ENCODE measurements at regions of chr19 and their contacts with region 1.

Region 1: GRCh38 chr19:40603389-40604135 is 2.4 kb downstream of the LTBP4 start:
- DNase-seq: peak; percentile 98
- H3K4me3 ChIP-seq: peak overlapping the region; percentile 66
- H3K27ac ChIP-seq: no peak overlapping the region
- H3K4me1 ChIP-seq: peaks cover 62% of the 10 kb centered on the region
- CTCF ChIP-seq: no peak

Region 2: GRCh38 chr19:40285353-40286234 is 318.0 kb before region 1 on chr19:
- CTCF ChIA-PET with region 1: no interaction called
- POLR2A ChIA-PET with region 1: no interaction called
- intact Hi-C with region 1: loop called (anchors 10 kb)
- DNase-seq: peak; percentile 100
- H3K4me3 ChIP-seq: peak overlapping the region; percentile 85
- H3K27ac ChIP-seq: peak overlapping the region; percentile 94
- H3K4me1 ChIP-seq: peaks cover 54% of the 10 kb centered on the region
- CTCF ChIP-seq: no peak

Region 3: GRCh38 chr19:40576585-40577451 is 26.7 kb before region 1 on chr19 and contains the start of gene SHKBP1:
- CTCF ChIA-PET with region 1: no interaction called
- POLR2A ChIA-PET with region 1: no interaction called
- intact Hi-C with region 1: no loop called
- DNase-seq: peak; percentile 97
- H3K4me3 ChIP-seq: peak within 1 kb of the TSS; percentile 85
- H3K27ac ChIP-seq: peak within 1 kb of the TSS; percentile 38
- H3K4me1 ChIP-seq: peaks cover 19% of the 10 kb centered on the region
- CTCF ChIP-seq: no peak
- total RNA-seq, gene SHKBP1: 42.0 and 49.4 TPM in 2 replicates

Measured in OCI-LY7 (cell line).